ENCODE measurements at regions of chr2 and their contacts with region 1.

Region 1: DNA sequence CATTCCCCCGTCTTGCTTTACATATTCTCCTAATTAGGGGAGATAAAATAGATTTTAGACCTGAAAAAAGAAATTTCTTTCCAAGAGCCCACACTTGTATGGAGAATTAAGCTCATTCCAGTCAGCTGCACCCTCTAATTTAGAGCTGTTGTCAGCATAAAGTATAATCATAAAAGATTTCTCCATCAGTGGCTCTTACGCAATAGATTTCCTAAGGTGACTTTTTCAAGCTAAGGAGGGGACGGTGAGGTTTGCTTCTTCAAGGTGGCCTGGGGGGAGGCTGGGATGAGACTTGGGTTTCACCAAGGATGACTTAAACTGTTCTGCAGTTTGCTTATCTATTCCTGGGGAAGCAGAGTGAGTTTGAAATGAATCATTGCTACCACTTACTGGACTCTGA is 426.2 kb downstream of the NBAS start:
- DNase-seq: no peak
- H3K4me3 ChIP-seq: no peak overlapping the region
- H3K27ac ChIP-seq: no peak overlapping the region
- H3K4me1 ChIP-seq: no peaks in the 10 kb centered on the region
- H3K27me3 ChIP-seq: no peaks in the 10 kb centered on the region
- CTCF ChIP-seq: no peak
- EP300 ChIP-seq: no peak
- POLR2A ChIP-seq: no peak

Region 2: DNA sequence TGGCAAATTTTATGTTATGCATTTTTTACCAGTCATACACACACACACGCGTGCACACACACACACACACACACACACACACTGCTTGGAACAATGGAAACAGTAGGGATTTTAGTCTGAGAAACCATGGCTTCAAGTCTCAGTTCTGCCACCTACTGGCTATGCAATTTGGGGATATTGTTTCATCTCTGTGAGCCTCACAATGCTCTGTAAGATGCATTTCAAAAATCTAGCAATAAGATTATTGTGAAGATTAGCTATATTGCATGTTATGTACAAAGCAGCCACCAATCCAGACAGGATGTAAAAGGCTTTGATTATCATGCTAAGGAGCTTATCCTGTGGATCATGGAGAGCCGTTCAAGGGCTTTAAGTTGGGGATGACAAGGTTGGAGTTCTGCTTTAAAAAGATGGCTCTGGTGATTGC is 24.8 kb after region 1 on chr2:
- in situ Hi-C with region 1: no loop called
- intact Hi-C with region 1: loop called (anchors 1 kb)
- DNase-seq: no peak
- H3K4me3 ChIP-seq: no peak overlapping the region
- H3K27ac ChIP-seq: no peak overlapping the region
- H3K4me1 ChIP-seq: no peaks in the 10 kb centered on the region
- H3K27me3 ChIP-seq: no peaks in the 10 kb centered on the region
- CTCF ChIP-seq: peak in 4 of 5 experiments; percentile 28 to 44 (median 40)
- EP300 ChIP-seq: no peak
- POLR2A ChIP-seq: no peak

Region 3: DNA sequence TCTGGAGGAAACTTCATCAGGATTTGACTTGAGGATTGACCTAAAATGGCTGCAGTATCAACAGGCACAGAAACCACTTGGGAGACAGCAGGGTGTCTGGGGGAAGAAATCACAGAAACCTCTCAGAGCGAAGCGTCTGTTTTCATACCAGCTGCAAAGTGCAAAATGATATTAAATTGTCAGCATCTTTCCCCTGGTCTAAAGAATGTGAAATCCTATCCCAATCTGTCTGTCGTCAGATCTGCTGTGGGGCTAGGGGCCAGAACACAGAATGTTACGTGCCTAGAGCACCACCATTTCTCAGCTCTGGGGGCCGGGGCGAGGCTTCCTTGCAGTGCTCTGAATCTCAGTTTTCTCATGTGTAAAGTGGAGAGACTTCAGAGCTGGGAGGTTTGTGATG is 751.3 kb after region 1 on chr2:
- in situ Hi-C with region 1: no loop called
- intact Hi-C with region 1: no loop called
- DNase-seq: no peak
- H3K4me3 ChIP-seq: no peak overlapping the region
- H3K27ac ChIP-seq: no peak overlapping the region
- H3K4me1 ChIP-seq: no peaks in the 10 kb centered on the region
- H3K27me3 ChIP-seq: no peaks in the 10 kb centered on the region
- CTCF ChIP-seq: no peak
- EP300 ChIP-seq: no peak
- POLR2A ChIP-seq: no peak

Measured in transverse colon (tissue), 4 donors.